Common myeloid progenitor, CD34-positive (primary cell): ENCODE measurements at regions of chr3 and their contacts with region 1.

Region 1: GRCh38 chr3:40800343-40800742 is 275.6 kb downstream of the ZNF621 start:
- DNase-seq: peak; percentile 14 to 83 (median 76)
- H3K4me3 ChIP-seq: peak overlapping the region in 1 of 7 experiments; percentile 29
- H3K27ac ChIP-seq: no peak overlapping the region
- H3K4me1 ChIP-seq: peaks cover 14 to 29% (median 18%) of the 10 kb centered on the region in 4 experiments
- H3K27me3 ChIP-seq: no peaks in the 10 kb centered on the region

Region 2: DNA sequence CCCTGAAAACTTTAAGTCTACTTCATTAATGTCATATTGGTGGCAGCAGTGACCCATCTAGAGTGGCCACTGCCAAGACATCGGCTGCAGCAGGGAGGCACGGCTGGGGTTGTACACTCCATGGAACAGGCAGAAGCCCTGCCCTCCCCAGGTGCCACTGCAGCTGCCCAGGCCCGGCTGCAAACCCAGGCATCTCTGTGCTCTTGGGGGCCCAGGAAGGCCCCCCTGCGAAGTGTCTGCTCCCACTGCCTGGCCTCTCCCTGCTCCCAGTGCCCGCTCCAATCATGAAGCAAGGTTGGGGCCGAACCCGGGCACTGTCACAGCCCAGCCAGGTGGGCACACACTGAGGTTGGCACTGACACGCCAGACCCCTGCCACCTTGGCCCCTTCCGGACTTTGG is 355.3 kb before region 1 on chr3:
- CTCF ChIA-PET with region 1: no interaction called
- POLR2A ChIA-PET with region 1: no interaction called
- DNase-seq: no peak
- H3K4me3 ChIP-seq: no peak overlapping the region
- H3K27ac ChIP-seq: no peak overlapping the region
- H3K4me1 ChIP-seq: no peaks in the 10 kb centered on the region
- H3K27me3 ChIP-seq: no peaks in the 10 kb centered on the region

Region 3: DNA sequence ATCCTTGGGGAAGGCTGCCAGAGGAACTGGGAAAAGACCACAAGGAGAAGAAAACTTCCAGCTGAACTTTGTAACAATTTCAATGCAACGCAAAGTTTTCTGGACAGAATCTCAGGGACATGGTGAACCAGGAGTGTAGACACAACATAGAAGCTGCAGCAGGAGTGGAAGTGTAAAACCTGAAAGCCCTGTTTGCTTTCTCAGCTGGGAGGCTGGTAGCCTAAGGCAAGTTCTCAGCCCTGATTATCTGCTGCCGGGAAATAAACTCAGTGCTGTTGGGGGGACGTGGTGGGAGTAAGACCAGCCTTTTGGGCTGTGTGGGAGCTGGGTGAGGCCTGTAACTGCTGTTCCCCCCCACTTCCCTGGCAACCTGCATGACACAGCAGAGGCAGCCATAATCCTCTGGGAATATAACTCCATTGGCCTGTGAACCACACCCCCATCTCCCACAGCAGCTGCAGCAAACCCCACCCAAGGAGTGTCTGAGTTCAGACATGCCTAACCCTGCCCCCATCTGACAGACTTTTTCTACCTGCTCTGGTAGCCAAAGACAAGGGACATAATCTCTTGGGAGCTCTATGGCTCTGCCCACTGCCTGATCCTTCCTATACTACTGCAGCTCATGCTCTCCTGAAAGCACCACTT is 168.9 kb before region 1 on chr3:
- CTCF ChIA-PET with region 1: no interaction called
- POLR2A ChIA-PET with region 1: no interaction called
- DNase-seq: no peak
- H3K4me3 ChIP-seq: no peak overlapping the region
- H3K27ac ChIP-seq: no peak overlapping the region
- H3K4me1 ChIP-seq: no peaks in the 10 kb centered on the region
- H3K27me3 ChIP-seq: no peaks in the 10 kb centered on the region

Region 4: DNA sequence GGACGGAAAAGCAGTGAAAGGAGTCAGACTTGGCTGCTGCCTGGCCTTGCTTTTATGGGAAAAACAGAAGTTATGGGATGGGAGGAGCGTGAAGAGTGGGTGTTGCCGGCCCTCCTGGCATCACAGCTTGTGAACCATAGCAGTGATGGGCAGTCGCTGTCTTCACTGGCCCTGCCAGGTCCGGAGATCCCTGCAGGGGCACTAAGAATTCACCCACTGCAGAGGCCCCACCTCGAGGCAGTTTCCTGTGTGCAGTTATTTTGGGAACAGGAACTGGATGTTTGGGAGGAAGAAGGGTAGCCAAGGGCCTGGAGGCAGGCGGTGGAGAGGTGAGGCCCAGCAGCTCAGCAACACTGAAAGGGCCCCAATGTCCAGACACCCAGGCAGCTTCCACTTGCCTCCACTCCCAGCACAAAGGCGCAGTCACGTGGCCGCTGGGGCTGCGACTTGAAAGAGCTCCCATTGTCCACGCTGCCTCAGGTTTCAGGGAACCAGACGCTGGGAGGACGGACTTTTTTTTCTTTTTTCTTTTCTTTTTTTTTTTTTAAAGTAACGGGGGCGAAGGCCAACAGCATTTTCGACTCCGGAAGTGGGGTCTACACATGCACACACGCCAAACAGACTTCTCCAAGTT is 19.9 kb before region 1 on chr3:
- CTCF ChIA-PET with region 1: interaction called, 10 read pairs
- POLR2A ChIA-PET with region 1: no interaction called
- DNase-seq: no peak
- H3K4me3 ChIP-seq: peak overlapping the region in 1 of 7 experiments; percentile 26
- H3K27ac ChIP-seq: no peak overlapping the region
- H3K4me1 ChIP-seq: peaks cover 0 to 9% (median 5%) of the 10 kb centered on the region in 4 experiments
- H3K27me3 ChIP-seq: no peaks in the 10 kb centered on the region